ENCODE measurements at regions of chr5 and their contacts with region 1.

Region 1: GRCh38 chr5:138641547-138642298 is 66.5 kb upstream of the HSPA9 start:
- DNase-seq: peak; percentile 64 to 71
- H3K4me3 ChIP-seq: no peak overlapping the region
- H3K27ac ChIP-seq: no peak overlapping the region
- H3K4me1 ChIP-seq: peaks cover 4 to 8% of the 10 kb centered on the region in 2 donors
- H3K27me3 ChIP-seq: no peaks in the 10 kb centered on the region
- CTCF ChIP-seq: peak in 4 of 6 experiments; percentile 50 to 69 (median 60)
- POLR2A ChIP-seq: no peak

Region 2: DNA sequence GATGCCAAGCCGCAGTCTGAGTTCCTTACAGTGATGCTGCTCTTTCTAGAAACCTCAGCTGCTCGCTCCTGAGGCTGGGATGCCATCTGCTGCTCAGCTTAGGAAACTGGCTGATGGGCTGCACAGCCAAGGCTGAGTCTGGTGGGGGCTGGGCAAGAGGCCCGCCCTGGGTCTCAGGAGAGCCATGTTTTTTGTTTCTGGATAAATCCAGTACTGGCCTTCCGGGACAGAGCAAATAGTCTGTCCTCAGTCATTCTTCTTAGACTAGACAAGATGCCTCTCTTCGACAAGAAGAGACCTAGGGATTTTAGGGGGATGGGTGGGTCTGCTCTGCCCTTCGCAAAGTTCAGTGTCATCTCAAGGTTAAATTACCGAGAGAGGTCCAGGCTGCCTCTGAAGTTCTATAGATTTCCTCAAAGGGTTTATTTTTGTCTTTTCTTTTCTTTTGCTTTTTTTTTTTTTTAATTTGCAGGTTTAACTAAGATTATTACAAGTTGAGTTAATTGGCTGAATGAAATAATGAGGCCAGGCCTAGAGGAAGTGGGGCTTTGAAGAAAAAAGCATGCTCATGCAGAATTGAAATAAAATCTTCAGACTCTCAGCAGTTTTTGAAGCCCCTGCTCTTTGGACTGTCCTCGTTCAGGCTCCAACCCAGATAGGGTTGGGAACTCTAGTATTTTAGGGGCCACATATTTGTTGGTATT is 621.2 kb after region 1 on chr5:
- intact Hi-C with region 1: loop called (anchors 10 kb)
- DNase-seq: peak; percentile 89 to 91
- H3K4me3 ChIP-seq: no peak overlapping the region
- H3K27ac ChIP-seq: peak overlapping the region in 1 of 3 donors; percentile 8
- H3K4me1 ChIP-seq: peaks cover 0 to 3% of the 10 kb centered on the region in 2 donors
- H3K27me3 ChIP-seq: no peaks in the 10 kb centered on the region
- CTCF ChIP-seq: peak; percentile 62 to 97 (median 94)
- POLR2A ChIP-seq: no peak

Measured in thyroid gland (tissue), 4 donors.